ENCODE measurements at regions of chr17 and their contacts with region 1.

Region 1: DNA sequence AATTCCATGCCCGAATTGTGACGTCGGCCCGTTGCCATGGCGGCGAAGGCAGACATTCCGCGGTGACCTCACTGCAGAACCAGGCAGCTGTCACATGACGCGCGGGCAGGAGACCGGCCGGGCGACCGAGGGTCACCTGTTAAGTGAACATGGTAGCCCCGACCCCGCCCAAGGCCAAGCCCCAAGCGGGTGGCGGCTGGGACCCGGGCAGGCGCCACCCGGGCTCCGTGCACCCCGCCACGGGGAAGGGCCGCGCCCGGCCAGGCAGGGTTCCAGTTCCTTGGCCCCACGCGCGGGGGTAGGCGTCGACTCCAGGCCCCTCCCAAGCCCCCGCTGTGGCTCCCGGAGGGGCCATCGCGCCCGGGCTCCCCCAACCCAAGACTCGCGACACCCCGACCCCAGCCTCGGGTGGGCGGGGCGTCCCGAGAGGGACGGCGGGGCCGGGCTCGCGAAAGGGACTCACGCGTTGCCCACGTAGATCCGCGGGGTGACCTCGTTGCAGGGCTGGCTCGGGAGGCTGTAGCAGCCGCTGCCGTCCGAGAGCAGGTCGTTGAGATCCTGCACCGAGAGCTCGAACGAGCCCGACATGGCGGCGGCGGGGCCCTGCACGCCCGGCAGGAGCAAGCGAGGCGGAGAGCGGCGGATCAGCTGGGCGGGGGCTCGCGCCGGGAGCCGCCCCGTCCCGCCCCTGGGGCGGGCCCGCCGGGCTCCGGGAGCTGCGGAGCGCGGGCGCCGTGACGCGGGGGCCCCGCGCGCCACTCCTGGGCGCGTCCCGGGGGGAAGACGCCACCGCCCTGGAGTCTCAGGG is at the start of gene DUSP3:
- DNase-seq: peak; percentile 51 to 88 (median 71)
- ATAC-seq: peak; percentile 98
- H3K4me3 ChIP-seq: peak within 1 kb of the TSS; percentile 75 to 88
- H3K4me3 Mint-ChIP-seq: peak within 1 kb of the TSS; percentile 84
- H3K27ac ChIP-seq: peak within 1 kb of the TSS; percentile 46 to 68
- H3K27ac Mint-ChIP-seq: peak within 1 kb of the TSS; percentile 52
- H3K4me1 ChIP-seq: peaks cover 11% of the 10 kb centered on the region
- H3K4me1 Mint-ChIP-seq: peaks cover 10% of the 10 kb centered on the region
- H3K27me3 ChIP-seq: no peaks in the 10 kb centered on the region
- H3K27me3 Mint-ChIP-seq: peaks cover 32% of the 10 kb centered on the region
- CTCF ChIP-seq: no peak
- total RNA-seq, gene DUSP3: 8.7 to 9.1 TPM

Region 2: DNA sequence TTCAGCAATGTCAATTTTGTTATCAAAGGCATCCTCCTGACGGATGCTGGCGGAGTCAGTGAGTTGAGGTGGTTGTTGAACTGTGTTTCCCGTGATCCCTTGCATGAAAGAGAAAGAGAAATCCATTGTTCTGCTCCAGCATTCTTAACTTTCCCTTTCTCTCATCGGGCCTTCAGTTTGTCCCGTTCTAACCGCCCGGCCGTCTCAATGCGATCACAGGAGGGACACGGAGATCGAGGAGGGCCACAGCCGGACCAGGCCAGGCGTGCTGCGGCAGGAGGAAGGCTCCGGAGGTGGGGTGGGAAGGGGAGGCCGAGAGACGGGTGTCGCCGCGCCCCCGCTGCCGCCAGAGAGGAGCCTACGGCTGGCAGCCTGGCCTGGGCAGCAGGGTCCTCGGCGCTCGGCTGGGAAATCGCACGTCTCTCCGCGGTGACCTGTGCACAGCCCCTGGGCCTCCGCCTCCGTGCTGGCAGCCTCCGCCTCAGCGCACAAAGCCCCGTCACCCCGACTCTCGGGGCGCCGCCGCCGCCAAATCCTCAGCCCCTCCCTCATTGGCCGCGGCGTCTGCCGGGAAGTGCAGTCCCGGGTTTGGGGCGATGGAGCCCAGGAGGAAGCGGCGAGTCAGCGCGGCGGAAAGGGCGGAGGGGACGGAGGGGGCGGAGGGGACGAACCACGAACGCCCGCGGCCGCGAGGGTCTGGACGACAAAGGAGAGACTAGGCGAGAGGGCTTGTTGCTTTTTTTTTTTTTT is 58.1 kb before region 1 on chr17:
- CTCF ChIA-PET with region 1: no interaction called
- POLR2A ChIA-PET with region 1: interaction called, 3 read pairs
- intact Hi-C with region 1: loop called (anchors 1 kb)
- DNase-seq: peak; percentile 44 to 86 (median 75)
- ATAC-seq: peak; percentile 90
- H3K4me3 ChIP-seq: peak overlapping the region; percentile 74 to 89
- H3K4me3 Mint-ChIP-seq: peak overlapping the region; percentile 96
- H3K27ac ChIP-seq: peak overlapping the region; percentile 77 to 87
- H3K27ac Mint-ChIP-seq: peak overlapping the region; percentile 95
- H3K4me1 ChIP-seq: peaks cover 3% of the 10 kb centered on the region
- H3K4me1 Mint-ChIP-seq: peaks cover 7% of the 10 kb centered on the region
- H3K27me3 ChIP-seq: no peaks in the 10 kb centered on the region
- H3K27me3 Mint-ChIP-seq: peaks cover 6% of the 10 kb centered on the region
- CTCF ChIP-seq: no peak

Region 3: GRCh38 chr17:43822570-43823190 is 44.1 kb after region 1 on chr17:
- CTCF ChIA-PET with region 1: no interaction called
- POLR2A ChIA-PET with region 1: no interaction called
- intact Hi-C with region 1: no loop called
- DNase-seq: no peak
- ATAC-seq: no peak
- H3K4me3 ChIP-seq: no peak overlapping the region
- H3K4me3 Mint-ChIP-seq: no peak overlapping the region
- H3K27ac ChIP-seq: no peak overlapping the region
- H3K27ac Mint-ChIP-seq: no peak overlapping the region
- H3K4me1 ChIP-seq: no peaks in the 10 kb centered on the region
- H3K4me1 Mint-ChIP-seq: no peaks in the 10 kb centered on the region
- H3K27me3 ChIP-seq: no peaks in the 10 kb centered on the region
- H3K27me3 Mint-ChIP-seq: no peaks in the 10 kb centered on the region
- CTCF ChIP-seq: no peak

Region 4: DNA sequence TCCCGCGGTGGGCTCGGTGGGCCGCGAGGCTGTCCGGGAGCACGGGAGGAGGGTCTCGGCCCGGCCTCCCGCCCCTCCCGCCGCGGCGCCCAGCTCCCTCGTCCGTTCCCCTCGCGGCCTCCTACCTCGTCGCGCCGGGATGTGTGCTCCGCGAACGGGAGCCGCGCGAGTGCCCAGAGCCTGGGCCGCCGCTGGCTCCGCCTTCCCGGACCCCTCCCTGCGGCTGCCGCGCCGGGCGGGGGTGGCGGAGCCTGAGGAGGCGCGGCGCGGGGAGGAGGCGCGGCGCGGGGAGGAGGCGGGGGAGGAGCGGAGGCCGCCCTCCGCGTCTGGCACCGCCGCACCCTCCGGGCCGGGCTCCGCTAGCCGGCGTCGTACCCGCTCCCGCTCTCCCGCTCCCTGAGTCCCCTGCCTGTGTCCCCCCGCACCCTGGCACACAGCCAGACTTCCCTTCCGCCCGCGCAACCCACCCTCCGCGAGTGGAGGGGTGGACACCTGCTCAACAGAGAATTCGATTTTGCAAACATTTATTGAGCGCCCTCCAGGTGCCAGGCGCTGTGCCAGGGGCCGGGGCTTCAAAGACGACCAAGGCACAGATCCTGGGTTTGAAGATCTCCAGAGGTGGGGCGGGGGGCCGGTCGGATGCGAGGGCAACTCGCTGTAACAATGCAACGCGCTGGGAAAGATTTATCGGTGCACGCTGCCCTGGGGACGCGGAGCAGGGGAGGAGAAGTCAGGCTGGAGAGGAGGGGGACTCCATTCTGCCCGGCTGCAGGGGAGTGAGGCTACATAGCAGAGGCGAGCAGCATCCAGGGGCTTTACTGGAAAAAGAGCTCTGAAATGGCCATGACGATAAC is 54.7 kb after region 1 on chr17 and contains the start of gene MPP3:
- CTCF ChIA-PET with region 1: no interaction called
- POLR2A ChIA-PET with region 1: no interaction called
- intact Hi-C with region 1: loop called in 1 of 2 experiments (anchors 5 kb)
- DNase-seq: peak; percentile 9 to 76 (median 44)
- ATAC-seq: peak; percentile 95
- H3K4me3 ChIP-seq: peak within 1 kb of the TSS; percentile 47 to 74
- H3K4me3 Mint-ChIP-seq: peak within 1 kb of the TSS; percentile 80
- H3K27ac ChIP-seq: no peak within 1 kb of the TSS
- H3K27ac Mint-ChIP-seq: no peak within 1 kb of the TSS
- H3K4me1 ChIP-seq: peaks cover 9% of the 10 kb centered on the region
- H3K4me1 Mint-ChIP-seq: peaks cover 15% of the 10 kb centered on the region
- H3K27me3 ChIP-seq: peaks cover 7 to 9% of the 10 kb centered on the region in 2 experiments
- H3K27me3 Mint-ChIP-seq: peaks cover 32% of the 10 kb centered on the region
- CTCF ChIP-seq: no peak
- total RNA-seq, gene MPP3: not detected

Region 5: DNA sequence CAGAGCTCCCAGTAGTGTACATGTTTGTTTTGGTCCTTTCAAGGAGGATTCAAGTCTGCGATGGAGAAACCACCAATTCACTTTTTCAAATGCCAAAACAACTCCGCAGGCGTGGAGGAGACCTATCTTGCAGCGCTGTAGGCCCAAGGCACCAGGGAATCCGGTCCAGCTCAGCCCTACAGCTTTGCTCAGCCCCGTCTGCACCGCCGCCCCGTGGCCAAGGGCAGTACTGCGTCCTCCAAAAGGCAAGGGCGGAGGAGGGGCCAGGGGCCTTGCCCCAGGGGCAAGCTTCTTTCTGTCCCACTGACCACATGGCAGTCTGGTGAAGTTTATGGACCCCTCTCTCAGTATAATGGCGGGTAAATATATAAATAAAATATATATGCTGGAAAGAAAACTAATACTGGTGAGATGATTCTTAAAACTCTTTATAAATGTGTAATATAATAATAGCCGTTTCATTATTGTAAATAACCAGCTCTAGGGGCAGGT is 67.7 kb after region 1 on chr17:
- CTCF ChIA-PET with region 1: interaction called, 4 read pairs
- POLR2A ChIA-PET with region 1: no interaction called
- intact Hi-C with region 1: loop called in 1 of 2 experiments (anchors 2 kb)
- DNase-seq: peak; percentile 55 to 83 (median 72)
- ATAC-seq: peak; percentile 100
- H3K4me3 ChIP-seq: no peak overlapping the region
- H3K4me3 Mint-ChIP-seq: no peak overlapping the region
- H3K27ac ChIP-seq: no peak overlapping the region
- H3K27ac Mint-ChIP-seq: no peak overlapping the region
- H3K4me1 ChIP-seq: no peaks in the 10 kb centered on the region
- H3K4me1 Mint-ChIP-seq: no peaks in the 10 kb centered on the region
- H3K27me3 ChIP-seq: peaks cover 0 to 2% of the 10 kb centered on the region in 2 experiments
- H3K27me3 Mint-ChIP-seq: peaks cover 31% of the 10 kb centered on the region
- CTCF ChIP-seq: peak; percentile 91

Region 6: DNA sequence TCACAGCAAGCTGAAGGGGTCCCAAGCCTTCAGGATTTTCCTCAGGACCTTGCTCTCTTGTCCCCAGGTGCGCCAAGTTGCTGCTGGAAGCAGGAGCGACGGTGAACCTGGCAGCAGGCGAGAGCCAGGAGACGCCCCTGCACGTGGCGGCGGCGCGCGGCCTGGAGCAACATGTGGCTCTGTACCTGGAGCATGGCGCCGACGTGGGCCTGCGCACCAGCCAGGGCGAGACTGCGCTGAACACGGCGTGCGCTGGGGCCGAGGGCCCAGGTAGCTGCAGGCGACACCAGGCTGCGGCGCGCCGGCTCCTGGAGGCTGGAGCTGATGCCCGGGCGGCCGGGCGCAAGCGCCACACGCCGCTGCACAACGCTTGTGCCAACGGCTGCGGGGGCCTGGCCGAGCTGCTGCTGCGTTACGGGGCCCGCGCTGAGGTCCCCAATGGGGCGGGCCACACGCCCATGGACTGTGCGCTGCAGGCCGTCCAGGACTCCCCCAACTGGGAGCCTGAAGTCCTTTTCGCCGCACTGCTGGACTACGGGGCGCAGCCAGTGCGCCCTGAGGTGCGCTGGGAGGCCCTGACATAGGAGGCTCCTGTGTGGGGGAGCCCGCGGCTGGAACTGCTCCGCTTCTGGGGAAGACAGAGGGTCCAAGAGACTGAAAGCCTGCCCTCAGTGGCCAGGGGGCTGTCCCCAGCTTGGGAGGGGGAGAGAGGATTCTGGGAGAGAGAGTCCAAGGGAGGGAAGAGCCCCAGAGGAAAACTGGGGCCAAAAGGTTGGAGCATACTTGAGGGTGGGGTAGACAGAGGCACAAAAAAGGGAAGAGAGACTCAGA is 398.3 kb after region 1 on chr17:
- CTCF ChIA-PET with region 1: no interaction called
- POLR2A ChIA-PET with region 1: no interaction called
- intact Hi-C with region 1: no loop called
- DNase-seq: no peak
- ATAC-seq: no peak
- H3K4me3 ChIP-seq: no peak overlapping the region
- H3K4me3 Mint-ChIP-seq: no peak overlapping the region
- H3K27ac ChIP-seq: no peak overlapping the region
- H3K27ac Mint-ChIP-seq: peak overlapping the region; percentile 27
- H3K4me1 ChIP-seq: no peaks in the 10 kb centered on the region
- H3K4me1 Mint-ChIP-seq: peaks cover 7% of the 10 kb centered on the region
- H3K27me3 ChIP-seq: no peaks in the 10 kb centered on the region
- H3K27me3 Mint-ChIP-seq: no peaks in the 10 kb centered on the region
- CTCF ChIP-seq: no peak